Adrenal gland (tissue), 19 donors: ENCODE measurements at regions of chr5 and their contacts with region 1.

Region 1: DNA sequence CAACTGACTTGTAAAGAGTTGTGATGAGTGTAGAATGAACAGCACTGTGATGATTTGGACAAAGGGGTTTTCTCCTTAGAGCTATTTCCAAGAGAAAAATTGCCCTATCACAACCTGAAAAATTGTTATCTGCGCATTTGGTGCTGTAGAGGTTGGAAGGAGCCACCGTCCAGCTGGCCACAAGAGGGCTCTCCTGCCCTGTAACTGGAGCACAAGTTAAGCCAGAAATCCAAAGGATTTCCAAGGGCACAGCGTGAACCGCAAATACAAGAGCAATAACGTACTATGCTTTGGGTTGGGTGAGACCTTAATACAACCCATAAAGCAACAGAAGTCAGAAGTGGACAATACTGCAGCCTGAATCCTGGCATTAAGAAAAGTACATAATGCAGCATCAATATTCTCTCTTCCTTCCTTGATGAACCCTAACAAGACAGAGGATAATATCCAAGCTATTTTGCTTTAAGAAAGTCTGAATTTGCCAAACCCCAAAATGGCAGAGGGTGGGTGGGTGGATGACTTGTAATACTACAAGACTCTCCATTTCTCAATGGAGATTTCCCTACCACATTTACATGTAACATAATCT is 56.8 kb upstream of the SMIM32 start:
- DNase-seq: peak; percentile 61 to 86 (median 74)
- H3K4me3 ChIP-seq: no peak overlapping the region
- H3K27ac ChIP-seq: no peak overlapping the region
- H3K4me1 ChIP-seq: no peaks in the 10 kb centered on the region
- H3K27me3 ChIP-seq: peaks cover 4% of the 10 kb centered on the region
- CTCF ChIP-seq: peak; percentile 68 to 84 (median 79)
- POLR2A ChIP-seq: no peak

Region 2: GRCh38 chr5:136141561-136141960 is 108.2 kb before region 1 on chr5:
- intact Hi-C with region 1: no loop called
- DNase-seq: no peak
- H3K4me3 ChIP-seq: no peak overlapping the region
- H3K27ac ChIP-seq: no peak overlapping the region
- H3K4me1 ChIP-seq: peaks cover 0 to 32% of the 10 kb centered on the region in 2 donors
- H3K27me3 ChIP-seq: no peaks in the 10 kb centered on the region
- CTCF ChIP-seq: no peak
- POLR2A ChIP-seq: no peak

Region 3: DNA sequence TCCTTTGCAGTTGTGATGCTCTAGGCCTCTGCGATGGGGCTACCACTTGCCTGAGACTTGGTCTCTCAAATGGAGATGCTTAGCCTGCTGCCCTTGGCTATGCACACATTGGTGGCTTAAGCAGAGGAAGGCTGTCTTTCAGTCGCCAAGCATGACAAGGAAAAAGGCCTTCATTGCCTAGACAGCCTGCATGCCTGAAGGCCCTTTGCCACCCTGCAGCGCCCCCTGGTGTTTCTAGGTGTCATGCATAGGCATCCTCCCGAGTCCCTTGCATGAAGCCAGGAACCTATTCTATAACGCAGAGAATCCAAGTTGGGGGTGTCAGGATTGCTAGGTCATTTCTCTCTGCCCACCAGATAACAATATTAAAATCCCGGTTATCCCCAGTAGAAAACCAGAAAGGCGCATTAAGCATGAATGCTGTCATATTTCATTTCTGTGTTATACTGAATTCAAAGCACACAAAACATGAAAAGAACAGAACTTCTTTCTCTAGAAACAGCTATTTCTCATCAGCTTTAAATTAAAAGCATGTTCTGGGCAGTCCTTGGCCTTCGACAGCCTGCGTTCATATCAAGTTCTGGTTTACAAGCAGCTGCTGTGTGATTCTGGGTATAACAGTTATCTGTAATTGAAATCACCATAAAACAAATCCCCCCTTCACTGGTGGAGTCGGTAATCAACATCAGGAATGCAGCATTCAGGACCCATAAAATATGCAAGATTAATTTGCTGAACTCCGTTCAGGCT is 175.2 kb after region 1 on chr5:
- intact Hi-C with region 1: loop called in 1 of 2 experiments (anchors 5 kb)
- DNase-seq: peak; percentile 77 to 91 (median 85)
- H3K4me3 ChIP-seq: no peak overlapping the region
- H3K27ac ChIP-seq: no peak overlapping the region
- H3K4me1 ChIP-seq: no peaks in the 10 kb centered on the region
- H3K27me3 ChIP-seq: no peaks in the 10 kb centered on the region
- CTCF ChIP-seq: peak; percentile 48 to 75 (median 68)
- POLR2A ChIP-seq: no peak

Region 4: GRCh38 chr5:136769900-136770684 is 520.3 kb after region 1 on chr5:
- intact Hi-C with region 1: loop called (anchors 5 to 10 kb)
- DNase-seq: peak; percentile 67 to 87 (median 76)
- H3K4me3 ChIP-seq: no peak overlapping the region
- H3K27ac ChIP-seq: no peak overlapping the region
- H3K4me1 ChIP-seq: no peaks in the 10 kb centered on the region
- H3K27me3 ChIP-seq: no peaks in the 10 kb centered on the region
- CTCF ChIP-seq: peak; percentile 71 to 86 (median 82)
- POLR2A ChIP-seq: no peak